Activated CD8-positive, alpha-beta T cell treated with anti-CD3 and anti-CD28 coated beads, Interleukin-2, amount 10 ng/mL, durations not matched to agents 7 days and 5 days (primary cell): ENCODE measurements at regions of chr19 and their contacts with region 1.

Region 1: DNA sequence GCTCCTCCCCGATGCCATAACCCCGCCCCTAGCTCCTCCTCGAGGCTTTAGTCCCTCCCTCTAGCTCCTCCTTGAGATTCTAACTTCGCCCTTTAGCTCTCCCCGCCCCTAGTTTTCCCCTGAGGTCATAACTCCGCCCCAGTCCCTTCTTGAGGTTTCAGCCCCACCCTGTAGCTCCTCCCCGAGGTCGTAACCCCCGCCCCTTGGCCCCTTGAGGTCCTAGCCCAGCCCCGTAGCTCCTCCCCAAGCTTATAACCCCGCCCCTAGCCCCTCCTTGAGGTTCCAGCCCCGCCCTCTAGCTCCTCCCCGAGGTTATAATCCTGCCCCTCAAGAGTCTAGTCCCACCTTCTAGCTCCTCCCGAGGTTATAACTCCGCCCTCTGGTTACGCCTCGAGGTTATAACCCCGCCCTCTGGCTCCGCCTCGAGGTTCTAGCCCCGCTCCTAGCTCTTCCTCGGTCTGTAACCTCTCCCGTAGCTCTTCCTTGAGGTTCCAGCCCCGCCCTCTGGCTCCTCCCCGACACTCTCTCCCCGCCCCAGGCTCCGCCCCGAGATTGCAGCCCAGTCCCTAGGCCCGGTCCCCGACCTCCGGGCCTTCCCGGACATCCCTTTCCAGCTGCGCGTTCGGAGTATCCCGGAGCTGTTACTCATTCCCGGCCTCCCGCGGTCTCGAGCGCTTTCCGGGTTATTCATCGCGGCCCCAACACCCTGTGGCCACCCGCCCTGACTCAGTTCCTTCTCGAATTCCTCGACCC is 1.4 kb downstream of the PLAUR start:
- DNase-seq: peak; percentile 98
- ATAC-seq: peak; percentile 92
- H3K4me3 Mint-ChIP-seq: peak overlapping the region; percentile 79
- H3K27ac Mint-ChIP-seq: peak overlapping the region; percentile 77
- H3K4me1 Mint-ChIP-seq: peaks cover 47% of the 10 kb centered on the region
- H3K27me3 Mint-ChIP-seq: peaks cover 8% of the 10 kb centered on the region

Region 2: DNA sequence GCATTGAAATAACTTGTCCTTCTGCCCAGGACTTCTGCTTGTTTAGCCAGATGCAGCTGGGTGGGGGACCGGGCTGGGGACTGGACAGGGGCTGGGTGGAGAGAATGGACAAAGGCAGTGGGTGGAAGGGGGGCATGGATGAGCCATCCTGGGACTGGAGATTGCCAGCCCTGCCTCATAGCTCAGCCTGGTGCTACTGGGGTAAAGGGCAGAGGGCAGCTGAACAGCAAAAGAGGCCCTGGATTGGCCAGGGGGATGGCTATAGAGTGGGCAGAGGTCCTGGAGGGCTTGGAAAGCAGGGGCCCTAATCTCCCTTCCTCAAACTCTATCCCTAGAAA is 19.0 kb after region 1 on chr19:
- CTCF ChIA-PET with region 1: interaction called, 14 read pairs
- POLR2A ChIA-PET with region 1: no interaction called
- DNase-seq: no peak
- ATAC-seq: no peak
- H3K4me3 Mint-ChIP-seq: no peak overlapping the region
- H3K27ac Mint-ChIP-seq: no peak overlapping the region
- H3K4me1 Mint-ChIP-seq: no peaks in the 10 kb centered on the region
- H3K27me3 Mint-ChIP-seq: peaks cover 7% of the 10 kb centered on the region

Region 3: DNA sequence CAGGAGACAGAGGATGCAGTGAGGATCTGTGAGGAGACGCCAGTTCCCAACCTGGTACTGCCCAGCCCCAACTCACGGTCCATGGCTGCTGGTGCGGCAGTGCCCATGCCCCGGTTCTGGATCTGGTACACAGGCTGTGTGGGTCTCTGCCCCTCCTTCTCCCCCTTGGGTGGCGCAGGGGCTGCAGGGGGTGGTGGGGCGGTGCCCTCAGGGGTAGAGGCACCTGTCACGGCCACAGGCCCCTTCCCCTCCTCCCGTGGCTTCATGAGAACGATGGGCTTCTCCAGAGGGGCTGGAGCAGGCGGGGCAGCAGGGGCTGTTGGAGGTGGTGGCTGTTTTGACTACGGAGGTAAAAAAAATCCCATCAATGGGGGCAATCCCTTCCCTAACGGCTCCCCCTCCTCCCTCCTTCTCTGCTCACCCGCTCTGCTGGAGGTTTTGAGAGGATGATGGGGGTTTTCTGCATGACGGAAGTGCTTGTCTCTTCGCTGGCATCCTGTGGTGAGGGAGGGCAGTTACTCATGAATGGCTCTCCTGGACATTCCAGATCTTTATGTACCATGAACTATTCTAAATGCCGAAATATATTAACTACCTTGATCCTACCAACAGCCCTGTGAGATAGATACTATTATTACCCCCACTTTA is 79.1 kb after region 1 on chr19:
- CTCF ChIA-PET with region 1: interaction called, 29 read pairs
- POLR2A ChIA-PET with region 1: interaction called, 3 read pairs
- DNase-seq: no peak
- ATAC-seq: no peak
- H3K4me3 Mint-ChIP-seq: no peak overlapping the region
- H3K27ac Mint-ChIP-seq: peak overlapping the region; percentile 50
- H3K4me1 Mint-ChIP-seq: peaks cover 16% of the 10 kb centered on the region
- H3K27me3 Mint-ChIP-seq: no peaks in the 10 kb centered on the region

Region 4: DNA sequence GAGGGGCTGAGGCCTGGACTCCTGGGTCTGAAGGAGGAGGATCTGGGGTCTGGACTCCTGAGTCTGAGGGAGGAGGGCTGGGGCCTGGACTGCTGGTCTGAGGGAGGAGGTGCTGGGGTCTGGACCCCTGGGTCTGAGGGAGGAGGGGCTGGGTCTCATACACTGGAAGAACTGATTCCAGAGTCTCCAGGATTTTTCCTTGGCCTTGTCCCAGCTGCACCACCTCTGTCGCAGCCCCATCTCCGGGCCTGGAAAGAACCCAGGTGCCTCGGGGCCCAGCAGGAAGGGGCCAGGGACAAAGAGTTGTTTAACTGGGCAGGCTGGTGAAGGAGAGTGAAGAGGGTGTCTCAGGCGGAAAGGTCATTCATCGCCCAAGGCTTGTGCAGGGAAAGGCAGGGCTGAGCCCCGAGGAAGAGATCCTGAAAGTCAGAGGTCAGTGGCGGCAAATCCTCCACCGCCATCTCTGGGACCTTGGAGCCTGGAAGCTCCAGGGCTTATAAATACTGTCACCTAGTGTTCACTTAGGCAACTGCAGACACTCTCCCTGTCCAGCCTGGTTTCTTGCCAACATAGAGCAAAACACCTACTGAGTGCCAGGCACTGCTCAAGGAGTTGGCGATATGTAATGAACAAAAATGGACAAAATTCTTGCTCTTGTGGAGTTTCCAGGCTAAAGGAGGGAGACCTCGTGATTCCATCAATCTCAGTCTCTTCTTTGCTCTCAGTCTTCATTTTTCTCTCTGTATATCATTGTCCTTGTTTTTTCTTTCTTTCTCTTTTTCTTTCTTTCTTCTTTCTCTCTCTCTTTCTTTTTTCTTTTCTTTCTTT is 116.6 kb after region 1 on chr19:
- CTCF ChIA-PET with region 1: interaction called, 18 read pairs
- POLR2A ChIA-PET with region 1: no interaction called
- DNase-seq: peak; percentile 75
- ATAC-seq: peak; percentile 55
- H3K4me3 Mint-ChIP-seq: peak overlapping the region; percentile 16
- H3K27ac Mint-ChIP-seq: peak overlapping the region; percentile 89
- H3K4me1 Mint-ChIP-seq: peaks cover 43% of the 10 kb centered on the region
- H3K27me3 Mint-ChIP-seq: no peaks in the 10 kb centered on the region